Mammary epithelial cell (primary cell): ENCODE measurements at regions of chr3 and their contacts with region 1.

Region 1: GRCh38 chr3:149371001-149371722 is 6.3 kb downstream of the TM4SF1 start:
- DNase-seq: peak; percentile 79
- H3K4me3 ChIP-seq: peak overlapping the region in 2 of 3 experiments; percentile 2 to 11
- H3K27ac ChIP-seq: peak overlapping the region; percentile 88
- H3K4me1 ChIP-seq: peaks cover 72% of the 10 kb centered on the region
- H3K27me3 ChIP-seq: no peaks in the 10 kb centered on the region
- CTCF ChIP-seq: peak; percentile 9 to 44

Region 2: DNA sequence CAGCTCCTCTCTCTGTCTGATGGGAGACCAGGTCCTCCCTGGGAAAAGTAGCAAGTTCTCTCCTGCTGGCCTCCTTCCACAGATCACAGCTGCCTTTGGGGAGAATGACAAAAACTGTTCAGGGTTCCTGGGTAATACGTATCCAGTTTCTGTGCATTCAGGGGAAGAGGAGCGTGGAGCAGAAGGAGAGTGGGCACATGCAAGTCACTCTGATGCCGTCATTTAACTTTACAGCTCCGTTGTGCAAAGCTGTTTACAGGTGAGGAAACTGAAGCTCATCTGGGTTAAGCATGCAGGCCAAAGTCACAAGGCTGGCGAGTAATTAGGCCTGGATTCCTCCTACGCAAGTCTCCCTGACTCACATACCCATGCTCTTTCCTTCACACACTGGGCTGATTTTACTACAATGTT is 13.8 kb after region 1 on chr3:
- CTCF ChIA-PET with region 1: no interaction called
- dilution Hi-C with region 1: no loop called
- in situ Hi-C with region 1: no loop called
- intact Hi-C with region 1: loop called (anchors 2 kb)
- DNase-seq: peak; percentile 88
- H3K4me3 ChIP-seq: no peak overlapping the region
- H3K27ac ChIP-seq: peak overlapping the region; percentile 99
- H3K4me1 ChIP-seq: peaks cover 41% of the 10 kb centered on the region
- H3K27me3 ChIP-seq: no peaks in the 10 kb centered on the region
- CTCF ChIP-seq: no peak